RWPE1 (cell line): ENCODE measurements at regions of chr7 and their contacts with region 1.

Region 1: GRCh38 chr7:29921404-29922010 is 68.1 kb downstream of the SCRN1 start:
- DNase-seq: peak; percentile 65
- H3K27ac ChIP-seq: no peak overlapping the region
- CTCF ChIP-seq: peak; percentile 97

Region 2: DNA sequence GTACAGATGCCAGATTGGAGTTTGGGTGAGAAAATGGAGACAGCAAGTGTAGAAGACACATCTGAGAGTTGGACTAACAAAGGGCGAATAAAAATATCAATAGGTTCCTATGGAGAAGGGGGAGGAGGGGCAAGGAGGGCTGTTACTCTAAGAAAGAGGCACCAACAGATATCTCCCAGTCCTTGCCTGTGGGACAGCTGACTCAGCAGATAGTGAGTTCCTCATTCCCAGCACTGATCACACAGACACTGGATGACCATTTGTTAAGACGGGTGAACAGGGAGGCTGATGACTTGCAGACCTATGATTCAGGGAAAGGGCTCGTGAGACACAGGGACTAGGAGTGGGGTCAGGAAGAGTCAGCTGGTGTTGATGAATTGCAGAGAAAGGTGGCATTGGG is 363.6 kb before region 1 on chr7:
- CTCF ChIA-PET with region 1: no interaction called
- POLR2A ChIA-PET with region 1: no interaction called
- DNase-seq: no peak
- H3K27ac ChIP-seq: no peak overlapping the region
- CTCF ChIP-seq: no peak

Region 3: GRCh38 chr7:29878081-29878688 is 43.3 kb before region 1 on chr7:
- CTCF ChIA-PET with region 1: interaction called, 11 read pairs
- POLR2A ChIA-PET with region 1: no interaction called
- DNase-seq: peak; percentile 58
- H3K27ac ChIP-seq: no peak overlapping the region
- CTCF ChIP-seq: peak; percentile 76